Naive thymus-derived CD4-positive, alpha-beta T cell (primary cell): ENCODE measurements at regions of chr1 and their contacts with region 1.

Region 1: DNA sequence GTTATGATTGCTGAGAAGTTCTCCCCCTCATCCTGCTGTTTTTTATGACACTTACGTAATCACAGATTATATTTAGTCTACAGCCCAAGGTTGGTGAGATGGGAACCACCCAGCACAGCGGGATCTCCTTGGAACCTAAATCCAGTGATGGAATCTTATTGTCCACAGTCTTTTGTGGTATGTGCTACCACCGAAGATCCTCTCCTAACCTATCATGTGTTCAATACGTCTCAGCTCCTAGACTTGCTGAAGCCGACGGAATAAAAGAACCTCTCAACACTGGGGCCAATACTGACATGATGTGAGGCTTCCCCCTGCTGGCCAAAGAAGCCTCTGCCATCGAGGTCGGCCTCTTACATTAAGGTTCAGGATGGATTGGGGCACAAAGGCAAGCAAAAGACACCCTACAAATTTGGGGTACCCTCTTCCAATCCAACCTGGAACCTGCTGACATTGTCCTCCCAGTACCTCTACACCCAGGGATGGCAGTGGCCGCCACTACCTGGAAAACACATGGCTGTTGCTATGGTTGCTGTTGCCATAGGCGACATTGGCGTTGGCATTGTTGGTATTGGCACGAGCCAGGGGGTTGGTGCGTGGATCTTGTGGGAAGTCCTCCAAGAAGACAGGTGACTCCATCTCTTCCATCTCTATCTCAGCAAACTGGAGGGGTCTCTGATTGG is 19.4 kb upstream of the KIF21B start:
- DNase-seq: peak; percentile 54 to 80 (median 69)
- ATAC-seq: peak; percentile 91
- H3K4me3 ChIP-seq: no peak overlapping the region
- H3K4me3 Mint-ChIP-seq: peak overlapping the region in 2 of 10 donors; percentile 18 to 35
- H3K27ac ChIP-seq: no peak overlapping the region
- H3K27ac Mint-ChIP-seq: peak overlapping the region in 4 of 9 donors; percentile 6 to 39 (median 22)
- H3K4me1 ChIP-seq: peaks cover 0 to 3% of the 10 kb centered on the region in 2 donors
- H3K4me1 Mint-ChIP-seq: peaks cover 0 to 5% (median 3%) of the 10 kb centered on the region in 7 donors
- H3K27me3 ChIP-seq: no peaks in the 10 kb centered on the region
- H3K27me3 Mint-ChIP-seq: peaks cover 0 to 16% (median 0%) of the 10 kb centered on the region in 5 donors

Region 2: DNA sequence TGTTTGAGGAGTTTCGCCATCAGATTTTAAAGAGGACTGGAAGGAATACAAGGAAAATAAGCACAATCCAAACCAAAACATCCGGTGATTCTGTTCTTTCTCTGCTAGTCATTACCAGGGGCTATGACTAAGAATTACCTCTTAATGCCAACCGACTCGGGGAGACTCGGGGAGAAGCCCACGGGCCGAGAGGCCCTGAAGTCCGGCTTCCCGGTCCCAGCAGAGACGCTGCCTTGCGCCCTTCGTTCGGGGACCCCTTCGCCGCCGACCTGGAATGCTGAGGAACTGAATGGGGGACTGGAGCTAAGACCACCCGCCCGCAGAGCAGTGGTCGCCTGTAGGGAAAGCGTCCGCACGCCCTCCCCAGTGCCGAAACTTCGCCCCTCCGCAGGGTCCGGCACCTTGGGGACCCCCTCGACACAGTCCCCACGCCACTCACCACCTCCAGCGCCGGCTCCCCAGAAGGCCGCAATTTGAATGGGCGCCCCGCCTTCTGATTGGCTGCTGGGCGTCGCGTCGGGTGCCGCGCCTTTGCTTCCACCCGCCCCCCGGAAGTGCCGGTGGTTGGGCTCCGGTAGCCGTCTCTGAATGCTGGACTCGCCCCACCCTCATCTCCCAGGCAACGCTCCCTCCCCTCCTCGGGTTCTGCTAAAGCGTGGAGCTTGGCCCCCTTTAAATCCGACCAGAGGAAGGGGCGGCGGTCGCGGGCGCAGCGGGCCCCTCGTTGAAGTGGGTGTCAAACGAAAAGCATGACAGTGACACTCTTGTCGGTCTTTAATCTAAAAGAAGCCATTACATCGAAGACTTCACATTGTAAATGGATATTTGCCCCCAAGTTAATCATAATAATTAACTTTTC is 422.4 kb before region 1 on chr1 and contains the start of gene KIF14:
- CTCF ChIA-PET with region 1: no interaction called
- POLR2A ChIA-PET with region 1: no interaction called
- intact Hi-C with region 1: loop called in 1 of 2 experiments (anchors 1 kb)
- DNase-seq: peak; percentile 81 to 94 (median 89)
- ATAC-seq: peak; percentile 99
- H3K4me3 ChIP-seq: peak within 1 kb of the TSS; percentile 58
- H3K4me3 Mint-ChIP-seq: peak within 1 kb of the TSS; percentile 86 to 99 (median 96)
- H3K27ac ChIP-seq: peak within 1 kb of the TSS; percentile 67
- H3K27ac Mint-ChIP-seq: peak within 1 kb of the TSS; percentile 74 to 96 (median 93)
- H3K4me1 ChIP-seq: peaks cover 6% of the 10 kb centered on the region in 2 donors
- H3K4me1 Mint-ChIP-seq: peaks cover 0 to 56% (median 15%) of the 10 kb centered on the region in 7 donors
- H3K27me3 ChIP-seq: peaks cover 0 to 4% of the 10 kb centered on the region in 2 donors
- H3K27me3 Mint-ChIP-seq: no peaks in the 10 kb centered on the region
- total RNA-seq, gene KIF14: 0.16 to 16.2 (median 0.42) TPM in 3 of 5 experiments, not detected in the others

Region 3: GRCh38 chr1:200802865-200803512 is 239.9 kb before region 1 on chr1:
- CTCF ChIA-PET with region 1: no interaction called
- POLR2A ChIA-PET with region 1: no interaction called
- intact Hi-C with region 1: loop called (anchors 2 kb)
- DNase-seq: peak; percentile 34 to 75 (median 61)
- ATAC-seq: peak; percentile 93
- H3K4me3 ChIP-seq: no peak overlapping the region
- H3K4me3 Mint-ChIP-seq: no peak overlapping the region
- H3K27ac ChIP-seq: no peak overlapping the region
- H3K27ac Mint-ChIP-seq: peak overlapping the region in 1 of 9 donors; percentile 10
- H3K4me1 ChIP-seq: no peaks in the 10 kb centered on the region
- H3K4me1 Mint-ChIP-seq: peaks cover 0 to 10% (median 4%) of the 10 kb centered on the region in 7 donors
- H3K27me3 ChIP-seq: no peaks in the 10 kb centered on the region
- H3K27me3 Mint-ChIP-seq: peaks cover 0 to 31% (median 0%) of the 10 kb centered on the region in 5 donors

Region 4: GRCh38 chr1:200890818-200891773 is 151.8 kb before region 1 on chr1:
- CTCF ChIA-PET with region 1: interaction called, 3 read pairs
- POLR2A ChIA-PET with region 1: no interaction called
- intact Hi-C with region 1: loop called (anchors 2 to 5 kb)
- DNase-seq: peak in 2 of 9 donors; percentile 3 to 14
- ATAC-seq: no peak
- H3K4me3 ChIP-seq: peak overlapping the region; percentile 60
- H3K4me3 Mint-ChIP-seq: peak overlapping the region; percentile 12 to 86 (median 76)
- H3K27ac ChIP-seq: no peak overlapping the region
- H3K27ac Mint-ChIP-seq: peak overlapping the region in 2 of 9 donors; percentile 26 to 82
- H3K4me1 ChIP-seq: peaks cover 33 to 35% of the 10 kb centered on the region in 2 donors
- H3K4me1 Mint-ChIP-seq: peaks cover 33 to 55% (median 49%) of the 10 kb centered on the region in 7 donors
- H3K27me3 ChIP-seq: peaks cover 0 to 5% of the 10 kb centered on the region in 2 donors
- H3K27me3 Mint-ChIP-seq: peaks cover 9 to 63% (median 17%) of the 10 kb centered on the region in 5 donors

Region 5: DNA sequence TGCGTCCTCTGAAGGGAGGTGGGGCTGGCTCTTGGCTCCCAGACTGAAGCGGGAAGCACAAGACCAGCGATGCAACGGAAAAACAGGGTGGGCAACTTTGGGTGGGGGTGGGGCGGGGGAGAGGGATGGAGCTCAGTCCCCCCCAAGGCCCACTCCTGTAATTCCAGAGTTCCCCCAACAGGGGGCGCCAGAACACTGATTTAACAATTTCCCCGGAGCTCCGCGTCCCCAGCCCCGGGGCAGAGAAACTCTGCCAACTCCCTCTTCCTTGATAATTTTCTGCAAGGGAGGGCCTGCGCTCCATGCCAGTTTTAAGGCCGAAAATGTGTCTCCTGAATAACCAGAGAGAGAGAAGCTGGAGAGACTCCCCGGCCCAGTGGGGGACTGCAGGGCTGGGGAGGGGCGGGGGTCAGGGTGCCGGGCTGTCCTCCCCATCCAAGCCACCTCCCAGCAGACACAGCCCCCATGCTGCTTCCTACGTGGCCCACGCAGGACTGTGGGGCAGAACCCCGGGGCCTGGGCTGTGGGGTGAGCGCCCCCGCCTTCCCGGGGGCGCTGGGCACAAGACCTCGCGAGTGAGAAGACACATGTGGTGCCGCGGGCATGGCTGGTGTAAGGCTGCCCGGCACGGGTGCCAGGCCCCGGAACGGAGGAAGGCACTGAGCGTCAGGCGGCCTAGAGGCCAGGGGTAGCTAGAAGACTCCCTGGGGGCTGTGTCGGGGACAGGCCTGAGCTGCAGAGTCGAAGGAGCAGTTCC is 70.8 kb before region 1 on chr1:
- CTCF ChIA-PET with region 1: interaction called, 259 read pairs
- POLR2A ChIA-PET with region 1: interaction called, 5 read pairs
- intact Hi-C with region 1: loop called (anchors 1 kb)
- DNase-seq: peak; percentile 48 to 73 (median 59)
- ATAC-seq: peak; percentile 71
- H3K4me3 ChIP-seq: no peak overlapping the region
- H3K4me3 Mint-ChIP-seq: no peak overlapping the region
- H3K27ac ChIP-seq: no peak overlapping the region
- H3K27ac Mint-ChIP-seq: peak overlapping the region in 2 of 9 donors; percentile 38 to 84
- H3K4me1 ChIP-seq: no peaks in the 10 kb centered on the region
- H3K4me1 Mint-ChIP-seq: peaks cover 0 to 6% (median 0%) of the 10 kb centered on the region in 7 donors
- H3K27me3 ChIP-seq: no peaks in the 10 kb centered on the region
- H3K27me3 Mint-ChIP-seq: no peaks in the 10 kb centered on the region

Region 6: GRCh38 chr1:200979574-200980451 is 63.1 kb before region 1 on chr1:
- CTCF ChIA-PET with region 1: interaction called, 259 read pairs
- POLR2A ChIA-PET with region 1: interaction called, 3 read pairs
- intact Hi-C with region 1: loop called (anchors 1 kb)
- DNase-seq: peak in 8 of 9 donors; percentile 25 to 71 (median 40)
- ATAC-seq: peak; percentile 62
- H3K4me3 ChIP-seq: no peak overlapping the region
- H3K4me3 Mint-ChIP-seq: no peak overlapping the region
- H3K27ac ChIP-seq: no peak overlapping the region
- H3K27ac Mint-ChIP-seq: peak overlapping the region in 6 of 9 donors; percentile 32 to 77 (median 50)
- H3K4me1 ChIP-seq: no peaks in the 10 kb centered on the region
- H3K4me1 Mint-ChIP-seq: peaks cover 0 to 6% (median 0%) of the 10 kb centered on the region in 7 donors
- H3K27me3 ChIP-seq: no peaks in the 10 kb centered on the region
- H3K27me3 Mint-ChIP-seq: no peaks in the 10 kb centered on the region

Region 7: GRCh38 chr1:200992382-200993048 is 50.4 kb before region 1 on chr1:
- CTCF ChIA-PET with region 1: interaction called, 9 read pairs
- POLR2A ChIA-PET with region 1: no interaction called
- intact Hi-C with region 1: loop called in 1 of 2 experiments (anchors 1 kb)
- DNase-seq: no peak
- ATAC-seq: no peak
- H3K4me3 ChIP-seq: no peak overlapping the region
- H3K4me3 Mint-ChIP-seq: no peak overlapping the region
- H3K27ac ChIP-seq: no peak overlapping the region
- H3K27ac Mint-ChIP-seq: peak overlapping the region in 1 of 9 donors; percentile 17
- H3K4me1 ChIP-seq: no peaks in the 10 kb centered on the region
- H3K4me1 Mint-ChIP-seq: peaks cover 0 to 5% (median 0%) of the 10 kb centered on the region in 7 donors
- H3K27me3 ChIP-seq: no peaks in the 10 kb centered on the region
- H3K27me3 Mint-ChIP-seq: no peaks in the 10 kb centered on the region